ENCODE measurements at regions of chr4 and their contacts with region 1.

Region 1: GRCh38 chr4:162645381-162645780 is 481.6 kb upstream of the FSTL5 start:
- DNase-seq: peak in 1 of 2 experiments; percentile 19
- H3K4me3 ChIP-seq: no peak overlapping the region
- H3K4me3 Mint-ChIP-seq: no peak overlapping the region
- H3K27ac Mint-ChIP-seq: no peak overlapping the region
- H3K4me1 ChIP-seq: no peaks in the 10 kb centered on the region
- H3K4me1 Mint-ChIP-seq: no peaks in the 10 kb centered on the region
- H3K27me3 ChIP-seq: no peaks in the 10 kb centered on the region
- H3K27me3 Mint-ChIP-seq: peaks cover 3% of the 10 kb centered on the region
- CTCF ChIP-seq: peak; percentile 26 to 76

Region 2: DNA sequence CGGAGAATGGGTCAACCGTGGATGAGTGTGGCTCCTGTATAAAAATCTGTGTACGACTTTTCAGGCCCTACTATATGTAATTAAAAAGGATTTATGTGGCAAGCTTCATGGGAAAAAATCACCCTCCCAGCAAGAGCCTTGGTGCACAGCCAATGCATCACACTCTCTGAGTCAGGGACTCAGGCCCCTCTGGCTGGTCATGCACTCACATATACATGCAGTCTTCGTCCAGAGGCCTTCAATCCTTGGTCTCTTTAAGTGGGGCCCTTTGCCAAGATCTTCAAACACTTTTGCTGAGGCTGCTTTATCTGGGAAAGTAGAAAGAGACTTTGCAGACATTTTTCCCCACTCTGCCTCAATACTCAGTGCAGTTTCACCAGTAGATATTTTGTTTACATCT is 170.1 kb before region 1 on chr4:
- CTCF ChIA-PET with region 1: no interaction called
- POLR2A ChIA-PET with region 1: no interaction called
- intact Hi-C with region 1: no loop called
- DNase-seq: no peak
- H3K4me3 ChIP-seq: no peak overlapping the region
- H3K4me3 Mint-ChIP-seq: no peak overlapping the region
- H3K27ac Mint-ChIP-seq: no peak overlapping the region
- H3K4me1 ChIP-seq: no peaks in the 10 kb centered on the region
- H3K4me1 Mint-ChIP-seq: no peaks in the 10 kb centered on the region
- H3K27me3 ChIP-seq: no peaks in the 10 kb centered on the region
- H3K27me3 Mint-ChIP-seq: no peaks in the 10 kb centered on the region
- CTCF ChIP-seq: no peak

Region 3: DNA sequence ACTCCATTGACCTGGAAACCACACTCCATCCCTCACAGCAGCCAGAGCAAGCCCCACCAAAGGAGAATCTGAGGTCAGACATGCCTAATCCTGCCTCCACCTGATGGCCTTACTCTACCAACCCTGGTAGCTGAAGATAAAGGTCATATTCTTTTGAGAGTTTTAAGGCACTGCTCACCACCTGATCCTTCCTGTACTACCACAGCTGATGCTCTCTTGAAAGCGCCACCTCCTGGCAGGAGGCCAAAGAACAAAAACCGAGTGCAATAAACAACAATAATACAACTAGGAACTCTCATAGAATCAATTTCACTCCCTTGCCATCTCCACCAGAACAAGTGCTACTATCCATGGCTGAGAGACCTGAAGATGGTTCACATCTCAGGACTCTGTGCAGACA is 219.7 kb after region 1 on chr4:
- CTCF ChIA-PET with region 1: interaction called, 5 read pairs
- POLR2A ChIA-PET with region 1: no interaction called
- intact Hi-C with region 1: loop called (anchors 1 kb)
- DNase-seq: peak in 1 of 2 experiments; percentile 21
- H3K4me3 ChIP-seq: no peak overlapping the region
- H3K4me3 Mint-ChIP-seq: no peak overlapping the region
- H3K27ac Mint-ChIP-seq: no peak overlapping the region
- H3K4me1 ChIP-seq: no peaks in the 10 kb centered on the region
- H3K4me1 Mint-ChIP-seq: no peaks in the 10 kb centered on the region
- H3K27me3 ChIP-seq: no peaks in the 10 kb centered on the region
- H3K27me3 Mint-ChIP-seq: no peaks in the 10 kb centered on the region
- CTCF ChIP-seq: peak in 1 of 2 experiments; percentile 4

Region 4: DNA sequence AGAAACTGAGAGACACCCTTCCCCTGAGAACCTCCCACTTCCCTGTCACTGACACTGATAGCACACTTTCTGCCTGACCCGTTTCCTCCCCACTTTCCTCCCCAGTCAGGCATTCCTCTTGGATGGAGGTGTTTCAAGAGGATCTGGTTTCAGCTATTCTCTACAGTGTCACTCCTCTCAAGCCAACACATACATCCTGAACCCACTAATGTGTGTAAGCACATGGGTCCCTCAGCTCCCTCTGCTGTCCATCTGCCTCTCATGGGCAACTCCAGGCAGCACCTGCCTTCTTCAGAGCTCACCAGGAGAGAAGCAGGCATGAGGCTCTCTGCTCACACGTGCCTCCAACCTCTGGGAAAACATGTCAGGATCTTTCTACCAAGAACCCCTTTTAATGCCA is 313.7 kb after region 1 on chr4:
- CTCF ChIA-PET with region 1: interaction called, 13 read pairs
- POLR2A ChIA-PET with region 1: no interaction called
- intact Hi-C with region 1: loop called (anchors 1 kb)
- DNase-seq: peak; percentile 40 to 42
- H3K4me3 ChIP-seq: no peak overlapping the region
- H3K4me3 Mint-ChIP-seq: no peak overlapping the region
- H3K27ac Mint-ChIP-seq: no peak overlapping the region
- H3K4me1 ChIP-seq: no peaks in the 10 kb centered on the region
- H3K4me1 Mint-ChIP-seq: no peaks in the 10 kb centered on the region
- H3K27me3 ChIP-seq: no peaks in the 10 kb centered on the region
- H3K27me3 Mint-ChIP-seq: peaks cover 4% of the 10 kb centered on the region
- CTCF ChIP-seq: peak in 1 of 2 experiments; percentile 59

Measured in Caco-2 (cell line).